K562 (cell line): ENCODE measurements at regions of chr6 and their contacts with region 1.

Region 1: GRCh38 chr6:119129148-119129967 is 50.9 kb upstream of the FAM184A start:
- DNase-seq: peak; percentile 57 to 86 (median 60)
- ATAC-seq: peak; percentile 84
- H3K4me3 ChIP-seq: no peak overlapping the region
- H3K27ac ChIP-seq: peak overlapping the region; percentile 27; the same call in 1 of the 3 replicates
- H3K4me1 ChIP-seq: peaks cover 0 to 20% of the 10 kb centered on the region in 2 experiments; a peak in 3 of 5 replicates
- H3K27me3 ChIP-seq: no peaks in the 10 kb centered on the region
- CTCF ChIP-seq: peak; percentile 61 to 90 (median 75); a peak in 5 of 6 replicates
- EP300 ChIP-seq: no peak
- POLR2A ChIP-seq: no peak
- RAD21 ChIP-seq: peak; percentile 88 to 90

Region 2: DNA sequence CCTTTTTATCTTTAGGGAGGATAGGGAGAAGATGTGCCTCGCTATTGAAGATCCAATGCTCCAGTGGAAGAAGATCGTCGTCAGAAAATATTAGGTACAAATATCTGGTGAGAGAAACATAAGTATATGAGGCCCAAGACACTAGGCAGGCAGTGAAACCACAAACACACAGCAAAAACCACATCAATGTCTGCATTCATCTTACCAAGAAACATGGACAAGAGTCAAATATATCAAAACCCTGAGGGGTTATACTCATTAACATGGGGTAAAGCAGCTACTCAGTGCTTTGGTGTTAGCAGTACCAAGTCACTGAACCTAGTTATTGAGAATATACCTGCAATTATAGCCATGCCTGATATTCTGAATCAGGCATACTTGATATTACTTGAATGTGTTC is 50.5 kb after region 1 on chr6:
- CTCF ChIA-PET with region 1: no interaction called
- POLR2A ChIA-PET with region 1: no interaction called
- in situ Hi-C with region 1: no loop called
- intact Hi-C with region 1: loop called (anchors 2 kb)
- DNase-seq: no peak
- ATAC-seq: no peak
- H3K4me3 ChIP-seq: no peak overlapping the region
- H3K27ac ChIP-seq: no peak overlapping the region
- H3K4me1 ChIP-seq: no peaks in the 10 kb centered on the region
- H3K27me3 ChIP-seq: no peaks in the 10 kb centered on the region
- CTCF ChIP-seq: no peak
- EP300 ChIP-seq: no peak
- POLR2A ChIP-seq: no peak
- RAD21 ChIP-seq: no peak

Region 3: DNA sequence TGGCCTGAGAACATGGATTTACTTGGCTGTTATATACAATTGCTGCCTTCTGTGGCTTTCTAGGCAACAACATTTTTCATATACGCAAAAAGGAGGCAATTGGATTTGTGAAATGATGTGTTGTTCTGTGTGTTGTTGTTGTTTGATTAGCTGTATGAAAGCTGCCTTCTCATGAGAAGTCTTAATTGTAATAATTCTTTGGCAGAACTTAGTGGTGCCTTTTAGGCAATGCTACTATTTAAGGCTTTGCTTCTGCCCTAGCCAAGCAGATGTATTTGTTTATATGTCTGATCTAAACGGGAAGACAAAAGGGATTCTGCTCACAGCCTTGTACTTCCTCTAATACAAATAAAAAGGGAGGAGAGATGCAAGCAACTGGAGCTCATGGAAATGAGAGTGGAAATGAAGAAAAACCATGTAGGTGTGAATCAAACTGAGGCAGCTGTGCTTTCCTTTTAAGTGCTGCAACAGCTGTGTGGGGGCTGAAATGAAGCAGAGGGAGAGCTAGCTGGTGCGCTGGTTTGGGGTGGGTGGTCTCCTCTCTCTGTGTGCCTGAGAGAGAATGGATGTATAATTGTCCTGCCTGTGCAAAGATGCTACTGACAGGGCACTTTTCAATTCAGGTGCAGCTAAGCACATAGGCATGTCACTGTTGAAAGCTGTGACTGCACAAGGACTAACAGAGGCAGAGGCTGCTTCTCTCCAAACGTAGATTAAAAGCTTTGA is 607.1 kb after region 1 on chr6:
- CTCF ChIA-PET with region 1: no interaction called
- POLR2A ChIA-PET with region 1: no interaction called
- in situ Hi-C with region 1: no loop called
- intact Hi-C with region 1: loop called (anchors 5 kb)
- DNase-seq: no peak
- ATAC-seq: peak; percentile 53; the same call in 2 of the 3 replicates
- H3K4me3 ChIP-seq: no peak overlapping the region
- H3K27ac ChIP-seq: no peak overlapping the region
- H3K4me1 ChIP-seq: no peaks in the 10 kb centered on the region; a peak in 1 of 5 replicates
- H3K27me3 ChIP-seq: no peaks in the 10 kb centered on the region
- CTCF ChIP-seq: no peak
- EP300 ChIP-seq: no peak
- POLR2A ChIP-seq: no peak
- RAD21 ChIP-seq: no peak